ENCODE measurements at regions of chr4 and their contacts with region 1.

Region 1: DNA sequence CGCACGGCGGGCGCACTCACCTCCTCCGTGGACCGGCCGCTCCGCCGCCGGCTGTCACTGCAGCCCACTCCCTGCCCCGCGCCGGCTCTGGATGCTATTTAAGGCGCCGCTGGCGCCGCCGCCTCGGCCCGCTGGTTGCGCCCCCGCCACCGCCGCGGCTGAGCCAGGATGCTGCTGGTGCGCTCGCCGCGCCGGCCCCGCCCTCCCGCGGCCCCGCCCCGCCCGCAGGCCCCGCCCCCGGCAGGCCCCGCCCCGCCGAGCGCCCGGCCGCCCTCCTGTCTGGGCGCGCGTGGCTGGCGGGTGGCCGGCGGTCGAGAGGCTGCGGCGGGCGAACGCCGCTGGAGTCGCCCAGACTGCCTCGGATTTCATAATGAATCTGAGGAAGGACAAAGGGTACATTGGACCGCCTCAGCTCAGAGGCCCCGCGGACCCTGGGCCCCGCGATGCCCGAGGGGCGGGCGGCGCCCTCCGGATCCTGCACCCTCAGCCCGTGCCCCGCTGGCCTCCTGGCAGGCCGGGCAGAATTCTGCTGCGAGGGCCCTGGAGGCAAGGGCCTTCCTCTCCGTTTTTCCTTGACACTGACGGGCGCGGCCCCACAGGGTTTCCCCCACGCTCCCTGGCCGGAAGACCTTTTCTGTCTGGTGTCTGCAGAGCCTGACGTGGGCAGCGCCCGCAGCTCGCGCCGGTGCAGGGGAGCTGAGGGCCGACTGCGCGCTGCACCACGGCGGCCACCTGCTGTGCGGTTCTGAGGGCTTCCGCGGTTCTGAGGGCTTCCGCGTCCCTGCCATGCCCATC is at the start of gene ACSL1:
- DNase-seq: peak; percentile 89
- ATAC-seq: peak; percentile 80
- H3K4me3 ChIP-seq: peak within 1 kb of the TSS; percentile 58 to 94 (median 76)
- H3K4me3 Mint-ChIP-seq: peak within 1 kb of the TSS; percentile 98
- H3K27ac ChIP-seq: peak within 1 kb of the TSS; percentile 48 to 93
- H3K27ac Mint-ChIP-seq: peak within 1 kb of the TSS; percentile 96
- H3K4me1 ChIP-seq: peaks cover 23 to 26% of the 10 kb centered on the region in 2 donors
- H3K4me1 Mint-ChIP-seq: peaks cover 46% of the 10 kb centered on the region
- H3K27me3 ChIP-seq: no peaks in the 10 kb centered on the region
- H3K27me3 Mint-ChIP-seq: no peaks in the 10 kb centered on the region
- CTCF ChIP-seq: no peak
- total RNA-seq, gene ACSL1: 31.8 and 32.2 TPM in 2 replicates

Region 2: DNA sequence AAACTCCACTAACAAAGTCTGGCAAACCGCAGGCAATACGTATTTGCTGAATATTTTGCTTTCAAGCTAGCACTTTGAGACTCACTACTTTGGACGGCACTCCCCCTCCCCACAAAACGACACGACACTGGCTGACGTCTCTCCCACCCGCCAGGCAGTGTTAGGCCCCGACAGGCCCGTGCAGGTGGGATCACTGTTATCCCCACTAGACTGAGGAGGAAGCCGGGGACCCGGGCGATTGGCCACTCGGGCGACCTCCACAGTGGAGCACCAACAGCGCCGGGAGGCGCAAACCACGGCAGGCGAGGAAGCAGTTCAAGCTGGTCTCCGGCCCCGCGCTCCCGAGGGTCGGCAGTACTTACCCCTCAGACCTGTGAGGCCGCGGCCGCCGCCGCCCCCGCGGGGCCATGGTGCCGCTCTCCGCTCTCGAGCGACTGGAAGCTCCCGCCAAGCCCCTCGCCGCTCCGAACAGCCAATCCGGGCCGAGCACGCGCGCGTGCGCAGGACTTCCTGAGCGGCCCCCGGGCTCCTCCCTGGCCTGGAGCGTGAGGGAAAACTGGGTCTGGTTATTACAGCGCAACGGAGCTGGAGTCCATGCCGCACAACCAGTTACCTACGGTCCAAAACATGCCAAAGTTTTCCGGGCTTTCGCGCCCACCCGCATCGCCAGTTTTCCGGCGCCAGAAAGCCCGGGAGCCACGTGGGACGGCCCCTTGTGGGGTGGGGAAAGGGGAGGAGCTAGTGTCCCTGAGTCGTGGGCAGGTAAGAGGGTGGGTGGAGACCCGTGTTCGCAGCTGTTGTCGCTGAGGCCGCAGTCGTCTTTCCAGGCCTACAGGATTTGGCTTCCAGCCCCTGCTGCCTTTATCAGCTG is 92.2 kb before region 1 on chr4 and contains the start of gene CENPU:
- CTCF ChIA-PET with region 1: interaction called, 3 read pairs
- POLR2A ChIA-PET with region 1: no interaction called
- intact Hi-C with region 1: loop called (anchors 1 kb)
- DNase-seq: peak; percentile 96
- ATAC-seq: peak; percentile 95
- H3K4me3 ChIP-seq: peak within 1 kb of the TSS; percentile 65 to 76 (median 72)
- H3K4me3 Mint-ChIP-seq: peak within 1 kb of the TSS; percentile 93
- H3K27ac ChIP-seq: peak within 1 kb of the TSS; percentile 1 to 52
- H3K27ac Mint-ChIP-seq: peak within 1 kb of the TSS; percentile 93
- H3K4me1 ChIP-seq: peaks cover 7 to 12% of the 10 kb centered on the region in 2 donors
- H3K4me1 Mint-ChIP-seq: peaks cover 16% of the 10 kb centered on the region
- H3K27me3 ChIP-seq: no peaks in the 10 kb centered on the region
- H3K27me3 Mint-ChIP-seq: no peaks in the 10 kb centered on the region
- CTCF ChIP-seq: no peak
- total RNA-seq, gene CENPU: 1.6 and 3.2 TPM in 2 replicates

Region 3: DNA sequence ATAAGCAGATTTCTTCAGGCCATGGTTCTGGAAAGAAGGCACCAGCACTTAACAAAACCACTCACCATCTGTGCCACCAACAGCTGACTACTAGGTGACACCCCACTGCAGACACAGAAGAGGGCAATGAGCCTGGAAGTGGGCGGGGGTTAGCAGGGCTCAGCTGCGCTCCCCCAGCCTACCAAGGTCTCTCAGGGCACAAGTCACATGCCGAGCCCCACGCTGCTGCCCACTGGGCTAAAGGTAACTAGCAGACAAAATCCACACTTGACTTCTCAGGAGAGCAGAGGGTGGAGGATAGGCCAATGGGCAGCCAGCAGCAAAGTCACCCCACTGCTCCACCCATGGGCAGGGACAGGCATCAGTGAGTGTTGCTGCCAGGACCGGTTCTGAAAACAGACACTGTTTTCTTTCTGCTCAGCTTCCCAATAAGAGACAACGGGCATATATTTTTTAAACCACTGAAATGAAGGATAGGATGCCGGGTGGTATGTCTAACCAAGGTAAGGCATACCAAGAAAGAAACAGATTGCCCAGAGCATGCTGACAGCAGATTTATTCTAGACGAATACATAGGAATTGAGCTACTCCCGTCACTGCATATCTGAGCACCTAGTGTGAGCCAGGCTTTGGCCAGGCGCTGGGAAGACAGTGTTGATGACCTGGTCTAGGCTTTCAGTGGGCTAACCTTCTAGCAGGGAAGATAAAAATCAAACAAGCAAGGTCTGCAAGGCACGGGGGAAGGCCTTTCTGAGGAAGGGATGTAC is 20.4 kb before region 1 on chr4:
- CTCF ChIA-PET with region 1: no interaction called
- POLR2A ChIA-PET with region 1: no interaction called
- intact Hi-C with region 1: loop called (anchors 1 kb)
- DNase-seq: peak; percentile 78
- ATAC-seq: peak; percentile 93
- H3K4me3 ChIP-seq: no peak overlapping the region
- H3K4me3 Mint-ChIP-seq: peak overlapping the region; percentile 63
- H3K27ac ChIP-seq: peak overlapping the region; percentile 39 to 53
- H3K27ac Mint-ChIP-seq: peak overlapping the region; percentile 77
- H3K4me1 ChIP-seq: peaks cover 15% of the 10 kb centered on the region in 2 donors
- H3K4me1 Mint-ChIP-seq: peaks cover 38% of the 10 kb centered on the region
- H3K27me3 ChIP-seq: no peaks in the 10 kb centered on the region
- H3K27me3 Mint-ChIP-seq: no peaks in the 10 kb centered on the region
- CTCF ChIP-seq: no peak

Region 4: GRCh38 chr4:184968784-184969201 is 142.7 kb after region 1 on chr4:
- CTCF ChIA-PET with region 1: no interaction called
- POLR2A ChIA-PET with region 1: no interaction called
- intact Hi-C with region 1: loop called (anchors 1 kb)
- DNase-seq: no peak
- ATAC-seq: no peak
- H3K4me3 ChIP-seq: no peak overlapping the region
- H3K4me3 Mint-ChIP-seq: no peak overlapping the region
- H3K27ac ChIP-seq: no peak overlapping the region
- H3K27ac Mint-ChIP-seq: no peak overlapping the region
- H3K4me1 ChIP-seq: no peaks in the 10 kb centered on the region
- H3K4me1 Mint-ChIP-seq: peaks cover 2% of the 10 kb centered on the region
- H3K27me3 ChIP-seq: peaks cover 0 to 2% (median 0%) of the 10 kb centered on the region in 4 experiments
- H3K27me3 Mint-ChIP-seq: peaks cover 16% of the 10 kb centered on the region
- CTCF ChIP-seq: no peak

Region 5: DNA sequence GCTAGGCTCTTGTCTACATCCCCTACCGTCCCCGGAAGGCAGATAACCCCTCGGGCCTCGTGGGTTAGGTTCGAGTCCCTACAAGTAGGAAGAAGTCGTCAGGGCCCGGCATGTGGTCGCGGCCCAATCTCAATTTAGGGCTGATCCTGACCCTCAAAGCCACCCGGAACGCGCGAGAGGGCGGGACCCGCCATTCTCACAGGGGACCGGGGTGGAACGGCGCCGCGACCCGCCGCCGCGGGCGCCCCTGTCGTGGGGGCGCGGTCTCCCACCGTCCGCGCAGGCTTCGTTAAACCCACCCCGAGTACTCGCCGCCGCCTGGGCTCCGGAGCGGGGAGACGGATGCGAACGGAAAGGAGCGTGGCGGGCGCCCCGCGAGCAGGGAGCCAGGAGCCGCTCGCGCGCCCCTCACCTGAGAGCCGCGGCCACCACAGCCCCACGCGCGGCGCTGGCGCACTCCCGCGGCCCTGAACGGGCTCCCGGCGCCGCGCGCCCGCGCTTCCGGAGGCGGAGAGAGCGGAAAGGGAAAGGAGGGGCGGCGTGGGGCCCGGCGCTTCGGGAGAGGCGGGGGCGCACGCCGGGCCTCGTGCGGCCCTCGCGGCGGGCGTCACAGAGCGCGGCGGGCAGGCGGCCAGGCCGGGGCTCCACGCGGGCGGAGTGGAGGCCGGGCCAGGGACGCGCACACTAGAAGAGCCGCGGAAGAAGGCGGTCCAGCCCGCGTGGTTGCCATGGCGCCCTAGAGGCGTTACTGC is 377.6 kb after region 1 on chr4 and contains the start of gene CFAP97:
- CTCF ChIA-PET with region 1: no interaction called
- POLR2A ChIA-PET with region 1: no interaction called
- intact Hi-C with region 1: loop called (anchors 5 kb)
- DNase-seq: peak; percentile 90
- ATAC-seq: peak; percentile 81
- H3K4me3 ChIP-seq: peak within 1 kb of the TSS; percentile 58 to 73 (median 71)
- H3K4me3 Mint-ChIP-seq: peak within 1 kb of the TSS; percentile 97
- H3K27ac ChIP-seq: peak within 1 kb of the TSS; percentile 76 to 90
- H3K27ac Mint-ChIP-seq: peak within 1 kb of the TSS; percentile 98
- H3K4me1 ChIP-seq: peaks cover 31 to 45% of the 10 kb centered on the region in 2 donors
- H3K4me1 Mint-ChIP-seq: peaks cover 45% of the 10 kb centered on the region
- H3K27me3 ChIP-seq: no peaks in the 10 kb centered on the region
- H3K27me3 Mint-ChIP-seq: no peaks in the 10 kb centered on the region
- CTCF ChIP-seq: peak; percentile 10
- total RNA-seq, gene CFAP97: 32.0 and 32.4 TPM in 2 replicates